Astrocyte of the cerebellum (primary cell): ENCODE measurements at regions of chr18 and their contacts with region 1.

Region 1: GRCh38 chr18:70355620-70356385 is 67.0 kb downstream of the SOCS6 start:
- DNase-seq: no peak
- H3K4me3 ChIP-seq: no peak overlapping the region
- CTCF ChIP-seq: no peak

Region 2: GRCh38 chr18:70256994-70257393 is 98.8 kb before region 1 on chr18:
- in situ Hi-C with region 1: no loop called
- DNase-seq: no peak
- H3K4me3 ChIP-seq: no peak overlapping the region
- CTCF ChIP-seq: no peak

Region 3: GRCh38 chr18:70390371-70391090 is 34.7 kb after region 1 on chr18:
- in situ Hi-C with region 1: loop called (anchors 5 kb)
- DNase-seq: no peak
- H3K4me3 ChIP-seq: no peak overlapping the region
- CTCF ChIP-seq: no peak

Region 4: GRCh38 chr18:70418546-70419311 is 62.9 kb after region 1 on chr18:
- in situ Hi-C with region 1: no loop called
- DNase-seq: no peak
- H3K4me3 ChIP-seq: no peak overlapping the region
- CTCF ChIP-seq: no peak